Left cardiac atrium (tissue), 4 donors: ENCODE measurements at regions of chr16 and their contacts with region 1.

Region 1: DNA sequence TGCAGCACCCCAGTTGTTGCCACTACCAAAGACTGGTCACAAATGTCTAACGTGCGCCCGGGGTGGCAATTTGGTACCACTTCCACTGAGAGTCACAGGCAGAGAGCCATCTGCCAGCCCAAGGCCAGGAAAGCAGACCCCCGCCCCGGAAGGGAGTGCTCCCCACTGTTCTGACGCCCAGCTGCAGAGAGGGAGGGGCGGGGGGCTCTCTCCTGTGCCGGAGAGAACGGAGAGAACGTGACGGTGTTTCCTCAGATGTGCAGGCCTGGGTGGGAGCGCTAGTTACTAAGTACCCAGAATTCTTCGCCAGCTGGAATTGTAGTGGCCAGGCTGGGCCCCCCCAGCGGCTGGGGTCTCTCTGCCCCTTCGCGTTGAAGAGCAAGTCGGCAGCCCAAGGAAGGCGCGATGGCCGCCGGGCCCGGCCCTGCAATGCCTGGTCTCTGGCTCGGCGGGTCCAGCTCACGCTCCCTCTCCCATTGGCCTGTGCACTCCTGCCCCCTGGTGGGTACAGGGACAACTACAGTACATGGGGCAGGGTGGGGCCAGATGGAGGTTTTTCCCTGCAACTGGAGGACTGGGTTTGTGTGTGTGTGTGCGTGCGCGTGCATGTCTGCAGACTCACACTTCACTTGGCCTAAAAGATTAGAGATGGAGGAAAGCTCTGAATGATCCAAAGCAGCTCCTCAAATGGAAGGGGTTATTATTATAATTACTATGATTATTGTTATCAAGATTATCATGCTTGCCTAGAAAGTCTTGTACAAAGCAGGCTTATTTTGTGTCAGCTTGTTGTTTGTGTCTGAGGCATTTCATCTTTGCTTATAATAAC is 107.1 kb downstream of the AMFR start:
- DNase-seq: peak; percentile 87
- ATAC-seq: peak; percentile 97 to 99

Region 2: DNA sequence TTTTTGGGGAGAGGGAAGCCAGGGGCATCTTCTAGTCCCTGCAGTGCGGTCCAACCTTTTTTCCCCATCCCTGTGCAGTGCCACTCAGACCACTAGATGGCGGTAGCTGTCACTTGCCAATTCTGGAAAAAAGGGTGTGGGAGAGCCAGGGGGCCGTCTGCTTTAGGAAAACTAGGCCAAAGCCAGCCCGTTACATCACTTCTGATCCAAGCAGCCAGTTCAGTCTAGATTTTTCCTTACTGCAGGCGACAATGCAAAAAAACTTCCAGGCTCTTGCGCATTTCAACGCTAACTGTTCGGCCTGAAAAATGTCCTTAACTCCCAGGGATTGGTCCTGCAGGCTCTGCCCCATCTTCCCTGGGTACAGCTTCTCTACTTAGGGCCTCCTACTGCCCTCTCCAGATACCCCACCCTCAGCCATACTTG is 373.8 kb before region 1 on chr16:
- intact Hi-C with region 1: loop called (anchors 2 kb)
- DNase-seq: peak; percentile 79
- ATAC-seq: peak; percentile 94 to 98

Region 3: DNA sequence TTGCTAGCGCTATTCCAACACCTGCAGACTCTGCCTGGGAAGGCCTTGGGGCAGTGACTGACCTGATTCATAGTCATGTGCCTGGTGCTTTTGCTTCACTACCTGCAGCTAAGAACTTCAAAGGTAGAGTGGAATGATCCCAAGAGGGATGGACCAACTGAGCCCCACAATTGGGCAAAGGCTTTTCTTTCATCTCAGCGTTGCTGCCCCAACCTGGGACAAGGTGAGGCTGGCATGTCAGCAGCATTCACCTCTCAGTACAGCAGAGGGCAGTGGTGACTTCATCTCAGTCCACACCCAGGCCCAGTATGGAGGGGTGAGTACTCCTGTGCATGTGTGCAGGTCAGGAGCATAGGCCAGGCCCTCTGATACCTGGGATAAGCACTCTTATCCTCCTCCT is 276.5 kb before region 1 on chr16:
- intact Hi-C with region 1: loop called in 1 of 2 experiments (anchors 5 kb)
- DNase-seq: peak; percentile 22
- ATAC-seq: peak; percentile 83 to 90

Region 4: DNA sequence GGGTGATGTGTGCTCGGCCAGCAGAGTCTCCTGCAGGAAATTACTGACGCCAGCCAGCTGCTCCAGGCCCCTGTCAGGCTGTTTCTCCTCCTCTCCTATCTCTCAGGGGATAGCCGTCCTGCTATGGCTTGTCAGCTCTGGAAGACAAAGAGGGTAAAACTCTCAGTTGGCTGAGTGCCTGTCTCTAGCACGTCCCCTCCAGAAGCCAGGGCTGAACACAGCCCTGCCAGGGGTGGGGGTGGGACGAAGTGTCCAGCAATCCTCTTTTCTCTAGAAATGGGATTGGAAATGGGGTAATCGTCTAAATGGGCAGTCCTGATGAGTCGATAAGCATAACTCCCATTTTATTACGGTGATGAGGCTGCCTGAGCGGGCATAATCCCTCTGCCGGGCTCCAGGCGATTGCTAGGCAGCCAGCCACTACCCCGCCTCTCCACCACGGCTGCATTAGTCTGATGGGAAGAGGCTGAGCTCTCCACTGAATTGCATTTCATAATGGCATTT is 216.0 kb before region 1 on chr16:
- intact Hi-C with region 1: loop called in 1 of 2 experiments (anchors 10 kb)
- DNase-seq: peak; percentile 62
- ATAC-seq: peak; percentile 91 to 92

Region 5: GRCh38 chr16:56191156-56191815 is 126.9 kb before region 1 on chr16 and contains the start of gene GNAO1:
- intact Hi-C with region 1: loop called in 1 of 2 experiments (anchors 5 kb)
- DNase-seq: peak; percentile 80
- ATAC-seq: peak; percentile 90
- total RNA-seq, gene GNAO1: 65.3 to 92.9 TPM

Region 6: DNA sequence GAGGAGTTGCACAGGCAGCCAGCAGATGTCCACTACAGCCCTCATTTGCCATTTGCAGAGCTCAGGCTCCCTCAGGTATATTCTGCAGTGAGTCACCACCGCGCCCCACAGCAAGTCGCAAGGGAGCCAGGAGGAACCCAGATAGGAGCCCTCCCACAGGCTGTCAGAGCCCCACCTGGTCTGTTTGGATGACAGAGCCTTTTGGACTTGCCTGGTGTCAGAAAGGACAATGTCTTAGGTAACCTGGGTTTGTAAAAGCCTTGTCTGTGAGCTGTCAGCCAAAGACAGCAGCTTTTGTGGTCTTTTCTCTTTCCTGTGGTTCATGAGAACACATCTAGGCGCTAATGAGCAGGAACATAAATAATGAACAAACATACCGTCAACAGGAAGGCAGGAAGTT is 56.1 kb before region 1 on chr16:
- intact Hi-C with region 1: loop called in 1 of 2 experiments (anchors 10 kb)
- DNase-seq: no peak
- ATAC-seq: peak in 1 of 2 donors; percentile 13

Region 7: DNA sequence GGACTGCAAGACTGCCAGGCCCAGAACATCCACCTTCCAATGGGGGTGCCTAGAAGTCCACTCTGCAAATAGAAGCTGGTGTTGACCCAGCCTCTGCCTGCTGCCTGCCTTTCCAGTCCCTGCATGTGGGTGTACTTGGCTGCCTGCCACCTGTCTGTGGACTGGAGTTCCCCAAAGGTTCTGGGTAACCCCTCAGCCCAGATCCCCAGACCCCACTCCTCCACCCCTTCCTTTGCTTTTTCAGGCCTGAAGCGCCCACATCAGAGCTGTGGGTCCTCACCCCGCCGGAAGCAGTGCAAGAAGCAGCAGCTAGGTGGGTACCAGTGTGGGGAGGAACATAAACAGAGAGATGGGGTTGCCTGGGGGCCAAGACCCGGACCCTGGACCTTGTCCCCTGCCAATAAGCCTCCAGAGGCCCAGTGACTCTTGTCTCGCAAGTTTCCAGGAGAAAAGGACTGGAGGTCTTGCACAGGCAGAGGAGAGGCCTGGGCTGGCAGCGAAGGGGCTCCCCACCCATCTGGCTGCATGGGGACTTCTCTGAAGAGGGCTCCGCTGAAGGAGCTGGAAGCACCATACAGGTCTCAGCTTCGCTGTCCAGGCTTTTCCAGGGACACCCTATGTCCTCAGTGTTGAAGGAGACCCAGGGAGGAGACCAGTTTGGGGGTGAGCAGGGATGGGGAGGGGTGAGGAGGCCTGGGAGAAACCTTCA is 705.5 kb after region 1 on chr16:
- intact Hi-C with region 1: no loop called
- DNase-seq: no peak
- ATAC-seq: no peak